Mammary epithelial cell (primary cell): ENCODE measurements at regions of chr3 and their contacts with region 1.

Region 1: DNA sequence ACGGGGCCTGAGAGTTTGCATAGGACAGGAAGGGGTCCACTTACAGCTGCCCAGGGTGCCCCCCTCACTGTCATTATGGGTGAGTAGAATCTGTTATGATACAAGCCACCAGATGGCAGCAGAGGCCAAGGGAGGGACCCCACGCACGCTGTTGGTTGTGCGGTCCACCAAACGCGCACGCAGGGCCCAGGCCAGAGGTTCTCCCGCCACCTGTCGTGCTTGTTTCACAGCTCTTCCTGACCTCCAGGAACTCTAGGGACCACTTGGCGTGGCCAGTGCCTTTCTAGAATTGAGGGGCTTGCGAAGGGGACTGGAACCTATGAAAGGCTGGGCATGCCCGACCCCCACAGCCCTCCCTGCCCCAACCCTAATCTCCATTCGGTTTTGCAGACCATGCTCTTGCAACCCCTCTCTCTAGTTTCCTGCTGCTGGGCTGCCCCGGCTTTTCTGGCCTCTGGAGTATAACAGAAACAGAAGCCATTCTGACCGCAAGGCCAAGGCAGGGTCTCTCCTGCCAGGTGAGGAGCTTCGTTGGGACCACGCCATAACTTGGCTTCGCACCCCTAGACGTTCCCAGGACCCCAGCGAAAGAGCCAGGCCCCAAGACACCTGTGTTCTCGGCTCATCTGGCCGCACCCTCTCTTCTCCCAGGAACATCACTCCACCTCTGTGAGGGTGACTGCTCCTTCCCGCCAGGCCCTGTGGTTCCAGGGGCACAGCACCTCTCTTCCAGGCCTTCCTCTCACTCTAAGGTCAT is 46.0 kb downstream of the ALDH1L1 start:
- DNase-seq: peak; percentile 14
- H3K4me3 ChIP-seq: no peak overlapping the region
- H3K27ac ChIP-seq: no peak overlapping the region
- H3K4me1 ChIP-seq: peaks cover 7% of the 10 kb centered on the region
- H3K27me3 ChIP-seq: no peaks in the 10 kb centered on the region
- CTCF ChIP-seq: peak; percentile 47 to 84

Region 2: DNA sequence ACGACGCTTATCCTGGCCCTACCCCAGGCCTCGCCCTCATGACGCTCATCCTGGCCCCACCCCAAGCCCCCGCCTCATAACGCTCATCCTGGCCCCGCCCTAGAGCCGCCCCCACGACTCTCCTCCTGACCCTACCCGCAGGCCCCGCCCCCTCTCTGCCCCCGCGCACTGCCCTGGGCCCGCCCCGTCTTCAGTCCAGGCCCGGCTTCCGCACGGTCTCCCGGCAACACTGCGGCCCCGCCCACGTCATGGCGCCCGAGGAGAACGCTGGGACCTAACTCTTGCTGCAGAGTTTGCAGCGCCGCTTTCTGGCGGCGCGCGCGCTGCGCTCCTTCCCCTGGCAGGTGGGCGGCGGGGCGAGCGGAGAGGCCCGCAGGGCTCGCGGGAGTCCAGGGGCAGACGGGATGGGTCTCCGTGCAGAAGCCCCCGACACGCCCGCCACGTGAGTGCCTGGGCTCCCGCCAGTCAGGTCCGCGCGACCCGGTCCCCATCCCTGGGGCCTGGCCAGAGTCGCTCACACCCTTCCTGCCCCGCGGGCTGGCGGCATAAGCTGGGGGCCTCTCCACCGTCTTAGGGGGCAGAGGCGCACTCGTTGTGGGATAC is 217.9 kb before region 1 on chr3:
- CTCF ChIA-PET with region 1: no interaction called
- dilution Hi-C with region 1: no loop called
- in situ Hi-C with region 1: no loop called
- intact Hi-C with region 1: loop called (anchors 5 kb)
- DNase-seq: peak; percentile 95
- H3K4me3 ChIP-seq: peak overlapping the region; percentile 86 to 89 (median 87)
- H3K27ac ChIP-seq: peak overlapping the region; percentile 96
- H3K4me1 ChIP-seq: no peaks in the 10 kb centered on the region
- H3K27me3 ChIP-seq: no peaks in the 10 kb centered on the region
- CTCF ChIP-seq: peak in 1 of 2 donors; percentile 45

Region 3: DNA sequence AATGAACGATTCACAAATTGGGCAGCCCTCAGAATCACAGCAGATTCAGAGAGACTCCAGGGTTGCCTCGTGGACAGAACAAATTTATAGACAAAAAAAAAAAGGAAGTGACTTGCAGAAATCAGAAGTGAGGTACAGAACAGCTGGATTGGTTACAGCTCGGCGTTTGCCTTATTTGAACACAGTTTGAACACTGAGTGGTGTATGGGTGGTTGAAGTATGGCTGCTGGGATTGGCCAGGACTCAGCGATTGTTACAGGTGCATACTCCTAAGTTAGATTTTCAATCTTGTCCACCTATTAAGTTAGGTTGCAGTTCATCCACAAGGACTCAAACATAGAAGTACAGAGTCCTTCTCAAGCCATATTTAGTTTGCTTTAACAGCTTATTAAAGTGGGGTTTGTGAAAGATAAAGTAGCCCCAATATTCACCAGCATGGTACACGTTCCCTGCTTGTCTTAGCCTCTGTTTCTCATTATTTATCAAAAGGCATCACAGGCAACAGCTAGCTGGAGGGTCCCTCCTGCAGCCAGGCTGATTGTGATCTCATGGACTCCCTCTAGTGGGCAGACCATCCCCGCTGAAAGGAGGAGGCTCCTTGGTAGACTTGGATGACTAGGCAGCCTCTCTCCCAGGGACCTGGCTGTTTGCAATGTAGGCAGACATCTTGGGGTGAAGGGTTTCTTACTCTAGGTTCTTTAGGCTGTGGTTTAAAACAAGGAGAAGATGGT is 63.6 kb after region 1 on chr3:
- CTCF ChIA-PET with region 1: no interaction called
- dilution Hi-C with region 1: no loop called
- in situ Hi-C with region 1: no loop called
- intact Hi-C with region 1: loop called (anchors 1 kb)
- DNase-seq: peak; percentile 46
- H3K4me3 ChIP-seq: no peak overlapping the region
- H3K27ac ChIP-seq: no peak overlapping the region
- H3K4me1 ChIP-seq: no peaks in the 10 kb centered on the region
- H3K27me3 ChIP-seq: no peaks in the 10 kb centered on the region
- CTCF ChIP-seq: peak; percentile 87 to 92

Region 4: DNA sequence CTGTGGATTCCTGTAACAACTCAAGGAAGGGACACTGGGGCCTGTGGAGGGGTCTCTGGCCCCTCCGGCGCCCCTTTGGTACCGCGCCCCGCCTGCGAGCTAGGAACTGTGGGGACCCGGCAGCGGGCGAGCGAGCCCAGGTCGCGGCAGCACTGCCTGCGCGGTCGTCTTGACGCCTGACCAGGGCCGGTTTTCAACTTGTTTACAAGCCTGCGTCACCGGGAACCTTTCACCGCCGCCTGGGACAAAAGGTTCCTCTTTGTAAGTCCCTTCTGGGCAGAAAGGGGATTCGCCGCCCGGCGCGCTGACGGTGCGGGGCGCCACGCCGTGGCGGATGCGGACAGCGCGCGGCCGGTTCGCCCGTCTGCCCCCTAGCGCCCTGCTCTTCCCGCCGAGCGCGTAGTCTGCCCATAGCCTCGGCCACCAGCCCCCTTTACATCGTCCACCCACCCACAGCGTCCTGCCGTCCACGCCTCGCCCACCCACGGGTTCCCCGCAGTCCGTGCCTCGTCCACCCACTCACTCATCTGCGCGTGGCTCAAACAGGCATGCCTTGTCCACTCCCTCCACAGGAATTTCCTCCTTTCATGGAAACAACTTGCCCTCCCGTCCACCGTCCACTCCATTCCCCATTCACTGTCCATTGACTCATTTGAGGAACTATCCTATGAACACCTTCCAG is 254.9 kb after region 1 on chr3:
- CTCF ChIA-PET with region 1: interaction called, 3 read pairs
- dilution Hi-C with region 1: loop called (anchors 5 kb)
- in situ Hi-C with region 1: loop called (anchors 10 to 25 kb)
- intact Hi-C with region 1: loop called (anchors 1 kb)
- DNase-seq: peak; percentile 69
- H3K4me3 ChIP-seq: peak overlapping the region; percentile 46 to 53 (median 46)
- H3K27ac ChIP-seq: no peak overlapping the region
- H3K4me1 ChIP-seq: peaks cover 3% of the 10 kb centered on the region
- H3K27me3 ChIP-seq: peaks cover 3% of the 10 kb centered on the region
- CTCF ChIP-seq: peak; percentile 77 to 97

Region 5: DNA sequence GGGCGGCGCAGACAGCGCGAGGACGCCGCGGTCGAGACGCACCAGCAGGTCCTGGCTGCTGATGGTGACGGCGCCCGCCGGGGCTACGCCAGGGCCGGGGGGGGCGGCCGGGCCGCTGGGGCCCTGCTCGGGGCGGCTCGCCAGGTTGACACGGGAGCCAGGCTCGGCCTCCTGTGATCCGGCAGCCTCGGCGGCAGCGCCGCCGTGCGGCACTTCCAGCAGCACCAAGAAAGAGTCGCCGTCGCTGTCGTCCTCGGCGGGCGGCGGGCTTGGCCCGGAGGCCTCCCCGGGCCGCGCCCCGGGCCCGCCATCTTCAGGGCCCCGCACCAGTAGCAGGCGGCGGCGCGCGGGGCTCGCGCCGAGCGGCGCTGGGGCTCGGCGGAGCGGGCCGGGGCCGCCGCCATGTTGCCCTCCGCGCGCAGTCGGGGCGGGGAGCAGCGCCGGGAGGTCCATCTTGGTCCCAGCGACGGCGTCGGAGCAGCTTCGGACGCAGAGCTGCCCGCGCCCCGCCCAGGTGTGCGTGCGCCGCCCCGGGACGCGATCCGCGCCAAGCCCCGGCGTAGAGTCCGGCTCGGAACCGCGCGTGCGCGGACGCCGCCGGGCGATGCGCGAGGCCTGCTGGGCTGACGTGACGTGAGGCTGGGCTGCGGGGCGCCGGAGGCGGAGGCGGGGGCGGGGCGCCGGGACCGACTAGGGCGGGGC is 341.2 kb after region 1 on chr3 and contains the start of gene ZXDC:
- CTCF ChIA-PET with region 1: no interaction called
- dilution Hi-C with region 1: no loop called
- in situ Hi-C with region 1: no loop called
- intact Hi-C with region 1: loop called (anchors 2 kb)
- DNase-seq: peak; percentile 93
- H3K4me3 ChIP-seq: peak within 1 kb of the TSS; percentile 78 to 83 (median 80)
- H3K27ac ChIP-seq: peak within 1 kb of the TSS; percentile 69
- H3K4me1 ChIP-seq: peaks cover 34% of the 10 kb centered on the region
- H3K27me3 ChIP-seq: no peaks in the 10 kb centered on the region
- CTCF ChIP-seq: peak; percentile 9 to 60
- total RNA-seq, gene ZXDC: 27.2 to 30.3 TPM